Ascending aorta (tissue), 2 donors: ENCODE measurements at regions of chr11 and their contacts with region 1.

Region 1: GRCh38 chr11:103806130-103806900 is 230.1 kb upstream of the DDI1 start:
- DNase-seq: peak in 1 of 2 donors; percentile 67
- H3K4me3 ChIP-seq: no peak overlapping the region
- H3K27ac ChIP-seq: peak overlapping the region; percentile 27 to 44
- H3K4me1 ChIP-seq: peaks cover 0 to 6% of the 10 kb centered on the region in 2 donors
- H3K27me3 ChIP-seq: no peaks in the 10 kb centered on the region
- CTCF ChIP-seq: no peak

Region 2: GRCh38 chr11:103844327-103845215 is 38.3 kb after region 1 on chr11:
- intact Hi-C with region 1: loop called (anchors 5 kb)
- DNase-seq: no peak
- H3K4me3 ChIP-seq: no peak overlapping the region
- H3K27ac ChIP-seq: no peak overlapping the region
- H3K4me1 ChIP-seq: peaks cover 0 to 6% of the 10 kb centered on the region in 2 donors
- H3K27me3 ChIP-seq: no peaks in the 10 kb centered on the region
- CTCF ChIP-seq: no peak

Region 3: DNA sequence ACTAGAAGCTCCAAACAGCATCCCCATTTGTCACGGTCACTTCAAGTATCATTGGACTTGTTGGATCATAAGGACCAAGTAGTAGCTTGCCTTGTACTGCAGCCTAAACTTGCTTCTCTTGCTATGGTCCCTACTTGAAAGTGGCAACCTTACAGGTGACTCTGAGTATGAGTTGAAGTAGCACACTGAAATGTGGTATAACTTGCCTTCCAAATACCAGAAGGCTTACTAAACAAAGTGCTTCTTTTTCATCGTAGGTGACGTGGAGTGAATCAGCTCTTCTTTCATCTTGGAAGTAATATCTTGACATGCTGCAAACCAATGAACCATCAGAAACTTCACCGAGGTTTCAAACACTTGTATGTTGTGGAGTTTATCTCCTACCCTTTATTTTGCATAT is 61.2 kb after region 1 on chr11:
- intact Hi-C with region 1: loop called (anchors 5 kb)
- DNase-seq: no peak
- H3K4me3 ChIP-seq: no peak overlapping the region
- H3K27ac ChIP-seq: no peak overlapping the region
- H3K4me1 ChIP-seq: peaks cover 3 to 17% of the 10 kb centered on the region in 2 donors
- H3K27me3 ChIP-seq: no peaks in the 10 kb centered on the region
- CTCF ChIP-seq: no peak

Region 4: DNA sequence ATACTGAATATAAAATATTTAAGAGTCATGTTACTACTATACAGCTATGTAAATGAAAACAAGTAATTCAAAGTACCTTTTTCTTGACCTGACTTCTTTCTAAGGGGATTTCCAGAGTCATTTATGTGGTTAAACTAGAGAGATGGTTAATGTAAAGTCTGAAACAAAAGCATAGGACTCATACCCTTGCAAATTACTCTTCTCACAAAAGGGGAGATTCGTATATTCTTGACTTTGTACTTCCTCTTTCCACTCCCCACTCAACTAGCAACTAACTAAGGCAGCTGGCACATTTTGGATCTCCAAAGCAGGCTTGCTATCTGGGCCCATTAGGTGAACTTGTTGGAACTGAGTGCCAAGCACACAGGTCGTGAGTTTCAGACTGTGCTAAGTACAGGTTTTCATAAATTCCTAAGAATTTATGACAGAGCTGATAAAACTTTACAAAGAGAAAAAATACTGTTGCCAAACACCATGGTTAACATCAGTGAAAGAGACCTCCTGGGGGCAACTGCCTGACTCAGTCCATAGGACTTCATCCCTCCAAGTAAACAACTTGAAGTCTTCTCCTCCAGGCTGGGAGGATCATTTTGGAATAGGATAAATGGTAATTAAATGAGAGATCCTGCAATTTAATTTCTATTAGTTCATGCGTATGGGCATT is 153.1 kb after region 1 on chr11:
- intact Hi-C with region 1: no loop called
- DNase-seq: no peak
- H3K4me3 ChIP-seq: no peak overlapping the region
- H3K27ac ChIP-seq: no peak overlapping the region
- H3K4me1 ChIP-seq: no peaks in the 10 kb centered on the region
- H3K27me3 ChIP-seq: no peaks in the 10 kb centered on the region
- CTCF ChIP-seq: no peak